Naive thymus-derived CD4-positive, alpha-beta T cell (primary cell): ENCODE measurements at regions of chr14 and their contacts with region 1.

Region 1: DNA sequence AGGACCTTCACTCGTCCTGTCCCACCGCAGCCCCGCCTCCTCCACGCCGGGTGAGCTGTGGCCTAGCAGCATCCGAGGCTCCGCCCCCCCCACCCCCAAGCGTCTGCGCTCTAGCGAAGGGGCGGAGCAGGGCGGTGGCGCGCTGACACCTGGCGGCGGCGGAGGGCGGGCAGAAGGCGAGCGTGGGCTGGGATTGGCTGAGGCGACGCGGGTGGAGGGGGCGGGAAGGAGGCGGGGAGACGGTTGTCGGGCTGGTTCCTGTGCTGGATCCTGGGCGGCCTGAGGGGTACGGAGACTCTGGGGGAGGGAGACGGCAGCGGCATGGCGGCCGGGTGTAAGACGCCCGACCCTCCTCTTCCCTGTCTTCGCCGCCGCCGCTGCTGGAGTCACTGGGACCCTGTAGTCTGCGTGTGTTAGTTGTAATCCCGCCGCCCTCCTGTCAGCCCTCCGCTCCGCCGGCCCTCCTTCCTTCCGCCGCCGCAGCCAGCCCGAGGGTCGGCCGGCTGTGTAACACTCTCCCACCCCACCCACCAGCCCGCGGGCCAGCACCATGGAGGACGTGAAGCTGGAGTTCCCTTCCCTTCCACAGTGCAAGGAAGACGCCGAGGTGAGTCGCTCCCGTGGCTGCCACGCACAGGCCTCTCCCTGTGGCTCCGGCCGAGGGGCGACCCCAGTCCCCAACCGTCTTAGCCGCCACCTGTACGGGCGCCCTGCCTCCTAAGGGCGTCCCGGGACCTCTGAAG is at the start of gene STYX:
- DNase-seq: peak; percentile 91 to 97 (median 94)
- ATAC-seq: peak; percentile 99
- H3K4me3 ChIP-seq: peak within 1 kb of the TSS; percentile 88
- H3K4me3 Mint-ChIP-seq: peak within 1 kb of the TSS; percentile 87 to 95 (median 94)
- H3K27ac ChIP-seq: peak within 1 kb of the TSS; percentile 94
- H3K27ac Mint-ChIP-seq: peak within 1 kb of the TSS; percentile 84 to 97 (median 89)
- H3K4me1 ChIP-seq: peaks cover 14 to 16% of the 10 kb centered on the region in 2 donors
- H3K4me1 Mint-ChIP-seq: peaks cover 18 to 40% (median 33%) of the 10 kb centered on the region in 7 donors
- H3K27me3 ChIP-seq: no peaks in the 10 kb centered on the region
- H3K27me3 Mint-ChIP-seq: no peaks in the 10 kb centered on the region
- total RNA-seq, gene STYX: 23.9 to 45.3 (median 29.2) TPM

Region 2: GRCh38 chr14:51094901-51095853 is 1634.9 kb before region 1 on chr14 and contains the start of gene TRIM9:
- CTCF ChIA-PET with region 1: no interaction called
- POLR2A ChIA-PET with region 1: no interaction called
- intact Hi-C with region 1: loop called in 1 of 2 experiments (anchors 10 kb)
- DNase-seq: peak; percentile 77 to 93 (median 91)
- ATAC-seq: peak; percentile 96
- H3K4me3 ChIP-seq: peak within 1 kb of the TSS; percentile 83
- H3K4me3 Mint-ChIP-seq: peak within 1 kb of the TSS; percentile 89 to 98 (median 95)
- H3K27ac ChIP-seq: peak within 1 kb of the TSS; percentile 58
- H3K27ac Mint-ChIP-seq: peak within 1 kb of the TSS; percentile 9 to 93 (median 87)
- H3K4me1 ChIP-seq: peaks cover 3 to 8% of the 10 kb centered on the region in 2 donors
- H3K4me1 Mint-ChIP-seq: peaks cover 4 to 18% (median 9%) of the 10 kb centered on the region in 7 donors
- H3K27me3 ChIP-seq: peaks cover 0 to 3% of the 10 kb centered on the region in 2 donors
- H3K27me3 Mint-ChIP-seq: peaks cover 12 to 70% (median 17%) of the 10 kb centered on the region in 5 donors
- total RNA-seq, gene TRIM9: 0.27 to 1.7 (median 0.39) TPM

Region 3: GRCh38 chr14:52695481-52696091 is 34.5 kb before region 1 on chr14 and contains the start of gene ERO1A:
- CTCF ChIA-PET with region 1: no interaction called
- POLR2A ChIA-PET with region 1: interaction called, 15 read pairs
- intact Hi-C with region 1: loop called (anchors 1 kb)
- DNase-seq: peak; percentile 26 to 83 (median 53)
- ATAC-seq: peak; percentile 82
- H3K4me3 ChIP-seq: peak within 1 kb of the TSS; percentile 79
- H3K4me3 Mint-ChIP-seq: peak within 1 kb of the TSS; percentile 95 to 99 (median 99)
- H3K27ac ChIP-seq: peak within 1 kb of the TSS; percentile 85
- H3K27ac Mint-ChIP-seq: peak within 1 kb of the TSS; percentile 94 to 99 (median 98)
- H3K4me1 ChIP-seq: peaks cover 26 to 27% of the 10 kb centered on the region in 2 donors
- H3K4me1 Mint-ChIP-seq: peaks cover 32 to 47% (median 42%) of the 10 kb centered on the region in 7 donors
- H3K27me3 ChIP-seq: no peaks in the 10 kb centered on the region
- H3K27me3 Mint-ChIP-seq: no peaks in the 10 kb centered on the region
- total RNA-seq, gene ERO1A: 65.3 to 201 (median 68.7) TPM

Region 4: DNA sequence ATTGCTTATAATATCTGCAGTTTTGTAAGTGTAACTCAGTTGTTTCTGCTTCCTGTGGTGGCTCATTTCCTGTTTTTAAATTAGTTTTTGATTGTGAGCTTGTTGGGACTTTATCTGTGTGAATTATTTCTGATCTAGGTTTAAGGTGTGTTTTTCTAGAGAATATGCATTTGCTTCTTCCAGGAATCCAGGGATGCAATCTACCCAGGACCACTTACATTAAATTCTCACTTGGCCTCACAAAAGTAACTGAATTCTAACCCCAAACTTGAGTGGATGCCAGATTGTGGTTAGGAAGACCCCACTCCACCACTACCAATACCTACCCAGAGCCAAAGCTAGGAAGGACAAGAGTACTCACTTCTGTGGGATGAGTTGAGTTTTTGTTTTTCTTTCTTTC is 11.8 kb after region 1 on chr14:
- CTCF ChIA-PET with region 1: interaction called, 5 read pairs
- POLR2A ChIA-PET with region 1: interaction called, 119 read pairs
- intact Hi-C with region 1: loop called (anchors 1 kb)
- DNase-seq: peak in 7 of 9 donors; percentile 13 to 52 (median 40)
- ATAC-seq: peak; percentile 60
- H3K4me3 ChIP-seq: peak overlapping the region; percentile 54
- H3K4me3 Mint-ChIP-seq: peak overlapping the region; percentile 75 to 93 (median 84)
- H3K27ac ChIP-seq: peak overlapping the region; percentile 68
- H3K27ac Mint-ChIP-seq: peak overlapping the region; percentile 92 to 100 (median 96)
- H3K4me1 ChIP-seq: peaks cover 48 to 64% of the 10 kb centered on the region in 2 donors
- H3K4me1 Mint-ChIP-seq: peaks cover 42 to 90% (median 74%) of the 10 kb centered on the region in 7 donors
- H3K27me3 ChIP-seq: no peaks in the 10 kb centered on the region
- H3K27me3 Mint-ChIP-seq: no peaks in the 10 kb centered on the region

Region 5: DNA sequence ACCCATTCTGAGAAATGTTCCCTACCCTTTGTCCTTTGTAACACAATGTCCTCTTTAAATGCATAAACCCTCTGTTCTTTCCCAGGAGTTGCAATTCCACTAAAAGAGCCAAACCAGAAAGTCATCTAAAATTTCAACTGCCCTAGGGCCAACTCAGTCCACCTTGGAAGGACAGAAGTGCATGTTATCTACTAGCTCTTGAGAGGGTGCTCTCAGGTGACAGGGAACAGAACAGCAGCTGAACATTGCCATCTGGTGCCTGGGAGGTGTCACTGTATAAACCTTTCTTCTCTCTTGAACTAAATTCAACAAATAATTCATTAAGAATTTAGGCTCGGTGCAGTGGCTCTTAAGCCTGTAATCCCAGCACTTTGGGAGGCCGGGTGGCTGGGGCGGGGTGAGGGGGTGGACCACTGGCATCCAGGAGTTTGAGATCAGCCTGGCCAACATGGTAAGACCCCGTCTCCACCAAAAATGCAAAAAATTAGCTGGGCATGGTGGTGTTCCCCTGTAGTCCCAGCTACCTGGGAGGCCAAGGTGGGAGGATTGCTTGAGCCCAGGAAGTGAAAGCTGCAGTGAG is 231.1 kb after region 1 on chr14:
- CTCF ChIA-PET with region 1: no interaction called
- POLR2A ChIA-PET with region 1: no interaction called
- intact Hi-C with region 1: loop called in 1 of 2 experiments (anchors 1 kb)
- DNase-seq: peak in 7 of 9 donors; percentile 35 to 63 (median 50)
- ATAC-seq: peak; percentile 84
- H3K4me3 ChIP-seq: no peak overlapping the region
- H3K4me3 Mint-ChIP-seq: no peak overlapping the region
- H3K27ac ChIP-seq: no peak overlapping the region
- H3K27ac Mint-ChIP-seq: peak overlapping the region in 1 of 9 donors; percentile 62
- H3K4me1 ChIP-seq: peaks cover 0 to 3% of the 10 kb centered on the region in 2 donors
- H3K4me1 Mint-ChIP-seq: peaks cover 0 to 7% (median 4%) of the 10 kb centered on the region in 7 donors
- H3K27me3 ChIP-seq: no peaks in the 10 kb centered on the region
- H3K27me3 Mint-ChIP-seq: peaks cover 0 to 5% (median 0%) of the 10 kb centered on the region in 5 donors